HepG2 (cell line): ENCODE measurements at regions of chr19 and their contacts with region 1.

Region 1: DNA sequence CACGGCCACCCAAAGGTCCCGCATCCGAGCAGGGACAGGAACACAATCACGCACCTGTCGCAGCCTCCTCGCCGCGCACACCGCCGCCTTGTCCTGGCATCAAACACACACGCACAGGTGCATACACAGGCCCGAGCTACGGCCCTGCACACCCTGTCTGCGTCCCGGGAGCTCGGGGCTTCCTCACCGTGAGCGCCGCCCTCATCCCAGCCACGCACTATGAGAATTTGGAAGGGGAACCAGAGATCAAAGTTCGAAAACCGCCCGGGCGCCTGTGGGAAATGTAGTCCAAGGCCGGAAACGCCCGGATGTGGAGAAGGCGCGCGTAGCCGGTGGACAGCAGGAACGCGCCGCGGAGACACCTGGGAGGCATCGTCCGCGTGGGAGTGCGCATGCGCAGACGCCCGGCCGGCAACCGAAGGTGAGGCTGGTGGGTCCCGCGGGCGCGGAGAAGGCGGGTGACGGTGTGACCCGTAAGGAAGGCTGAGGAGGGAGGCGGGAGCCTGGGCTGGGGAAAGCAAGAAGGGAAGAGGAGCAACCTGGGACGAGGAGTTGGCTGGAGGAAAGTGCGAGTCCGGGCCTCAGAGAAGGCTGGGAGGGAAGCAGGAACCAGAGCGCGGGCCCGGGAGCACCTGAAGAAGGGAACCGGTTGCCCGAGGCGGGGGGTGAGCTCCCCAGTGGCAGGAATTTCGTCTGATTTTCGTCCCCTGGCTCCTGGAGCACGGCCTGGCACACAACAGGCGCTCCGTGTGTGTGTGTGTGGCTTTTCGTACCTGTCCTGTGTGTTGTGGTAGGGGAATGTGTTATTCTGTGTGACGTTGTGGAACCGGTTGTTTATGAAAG is at the start of gene ZNF567:
- DNase-seq: peak; percentile 95
- ATAC-seq: peak; percentile 96
- H3K4me3 ChIP-seq: peak within 1 kb of the TSS; percentile 70 to 88 (median 86)
- H3K27ac ChIP-seq: peak within 1 kb of the TSS; percentile 62
- H3K4me1 ChIP-seq: peaks cover 16% of the 10 kb centered on the region
- H3K27me3 ChIP-seq: peaks cover 0 to 3% of the 10 kb centered on the region in 2 experiments; a peak in 2 of 5 replicates
- CTCF ChIP-seq: 0 out of 2 replicates have a peak, but pooled peaks have one; percentile 3
- EP300 ChIP-seq: peak; percentile 41 to 42; a peak in 1 of 4 replicates
- POLR2A ChIP-seq: peak; percentile 75 to 84
- RAD21 ChIP-seq: no peak
- total RNA-seq, gene ZNF567: 6.8 and 9.3 TPM in 2 replicates

Region 2: DNA sequence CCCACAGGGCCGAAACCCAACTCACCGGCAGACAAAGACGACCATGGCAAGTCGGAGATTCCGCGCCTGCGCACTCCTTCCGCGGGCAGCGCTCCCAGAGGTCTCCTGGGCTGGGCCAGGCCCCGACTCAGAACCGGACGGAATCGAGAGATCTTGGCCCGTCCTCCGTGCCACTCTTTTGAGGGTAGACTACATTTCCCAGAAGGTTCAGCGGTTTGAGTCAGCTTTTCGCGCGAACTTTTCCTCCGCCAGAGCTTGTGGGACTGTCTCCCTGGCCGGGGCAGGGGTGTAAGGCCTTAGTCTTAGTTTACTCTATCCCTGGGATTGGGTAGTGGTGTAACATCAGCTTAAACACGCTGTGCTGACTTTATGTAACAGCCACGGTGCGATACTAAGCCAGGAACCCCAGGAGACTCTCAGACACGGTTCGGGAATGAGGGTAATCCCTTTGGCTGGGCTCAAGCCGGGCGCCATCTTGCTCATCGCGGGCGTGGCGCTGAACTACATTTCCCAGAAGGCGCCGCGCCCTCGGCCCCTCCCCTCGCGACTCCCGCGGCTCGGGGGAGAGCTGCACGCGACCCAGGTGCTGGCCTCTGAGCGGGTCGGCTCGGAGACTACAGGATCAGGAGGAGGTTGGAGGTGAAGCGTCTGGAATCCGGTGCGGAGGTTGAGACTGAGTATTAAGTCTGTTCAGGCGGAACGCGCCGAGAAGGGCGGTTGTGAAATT is 159.1 kb before region 1 on chr19 and contains the start of gene ZNF260:
- CTCF ChIA-PET with region 1: no interaction called
- POLR2A ChIA-PET with region 1: interaction called, 12 read pairs
- in situ Hi-C with region 1: no loop called
- intact Hi-C with region 1: no loop called
- DNase-seq: peak; percentile 95
- ATAC-seq: peak; percentile 96
- H3K4me3 ChIP-seq: peak within 1 kb of the TSS; percentile 73 to 93 (median 85)
- H3K27ac ChIP-seq: peak within 1 kb of the TSS; percentile 86
- H3K4me1 ChIP-seq: peaks cover 18% of the 10 kb centered on the region
- H3K27me3 ChIP-seq: no peaks in the 10 kb centered on the region; a peak in 1 of 5 replicates
- CTCF ChIP-seq: 0 out of 2 replicates have a peak, but pooled peaks have one; percentile 3
- EP300 ChIP-seq: no peak
- POLR2A ChIP-seq: peak; percentile 77 to 90
- RAD21 ChIP-seq: peak; percentile 25; the same call in 1 of the 2 replicates
- total RNA-seq, gene ZNF260: 10.5 and 19.9 TPM in 2 replicates

Region 3: DNA sequence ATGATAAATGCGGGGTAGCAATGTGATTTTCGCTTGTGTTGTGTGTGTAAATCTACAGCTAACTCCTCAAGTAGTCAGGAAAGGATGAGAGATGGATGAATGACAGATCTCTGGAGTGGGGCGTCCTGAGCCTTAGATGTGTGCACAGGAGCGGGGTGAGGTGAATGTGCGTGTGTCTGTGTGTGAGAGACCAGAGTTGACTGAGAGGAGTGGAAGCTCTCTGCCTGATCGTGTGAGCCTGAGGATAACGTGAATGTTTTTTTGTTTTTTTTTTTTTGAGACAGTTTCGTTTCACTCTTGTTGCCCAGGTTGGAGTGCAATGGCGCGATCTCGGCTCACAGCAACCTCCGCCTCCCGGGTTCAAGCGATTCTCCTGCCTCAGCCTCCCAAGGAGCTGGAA is 21.6 kb before region 1 on chr19:
- CTCF ChIA-PET with region 1: no interaction called
- POLR2A ChIA-PET with region 1: interaction called, 18 read pairs
- in situ Hi-C with region 1: no loop called
- intact Hi-C with region 1: loop called (anchors 2 kb)
- DNase-seq: no peak
- ATAC-seq: no peak
- H3K4me3 ChIP-seq: peak overlapping the region; percentile 91 to 96 (median 93)
- H3K27ac ChIP-seq: no peak overlapping the region
- H3K4me1 ChIP-seq: peaks cover 8% of the 10 kb centered on the region
- H3K27me3 ChIP-seq: no peaks in the 10 kb centered on the region; a peak in 2 of 5 replicates
- CTCF ChIP-seq: no peak
- EP300 ChIP-seq: no peak
- POLR2A ChIP-seq: no peak
- RAD21 ChIP-seq: no peak

Region 4: GRCh38 chr19:36745870-36746269 is 58.4 kb after region 1 on chr19:
- CTCF ChIA-PET with region 1: no interaction called
- POLR2A ChIA-PET with region 1: no interaction called
- in situ Hi-C with region 1: no loop called
- intact Hi-C with region 1: no loop called
- DNase-seq: no peak
- ATAC-seq: no peak
- H3K4me3 ChIP-seq: no peak overlapping the region
- H3K27ac ChIP-seq: no peak overlapping the region
- H3K4me1 ChIP-seq: no peaks in the 10 kb centered on the region
- H3K27me3 ChIP-seq: no peaks in the 10 kb centered on the region
- CTCF ChIP-seq: no peak
- EP300 ChIP-seq: no peak
- POLR2A ChIP-seq: no peak
- RAD21 ChIP-seq: no peak

Region 5: DNA sequence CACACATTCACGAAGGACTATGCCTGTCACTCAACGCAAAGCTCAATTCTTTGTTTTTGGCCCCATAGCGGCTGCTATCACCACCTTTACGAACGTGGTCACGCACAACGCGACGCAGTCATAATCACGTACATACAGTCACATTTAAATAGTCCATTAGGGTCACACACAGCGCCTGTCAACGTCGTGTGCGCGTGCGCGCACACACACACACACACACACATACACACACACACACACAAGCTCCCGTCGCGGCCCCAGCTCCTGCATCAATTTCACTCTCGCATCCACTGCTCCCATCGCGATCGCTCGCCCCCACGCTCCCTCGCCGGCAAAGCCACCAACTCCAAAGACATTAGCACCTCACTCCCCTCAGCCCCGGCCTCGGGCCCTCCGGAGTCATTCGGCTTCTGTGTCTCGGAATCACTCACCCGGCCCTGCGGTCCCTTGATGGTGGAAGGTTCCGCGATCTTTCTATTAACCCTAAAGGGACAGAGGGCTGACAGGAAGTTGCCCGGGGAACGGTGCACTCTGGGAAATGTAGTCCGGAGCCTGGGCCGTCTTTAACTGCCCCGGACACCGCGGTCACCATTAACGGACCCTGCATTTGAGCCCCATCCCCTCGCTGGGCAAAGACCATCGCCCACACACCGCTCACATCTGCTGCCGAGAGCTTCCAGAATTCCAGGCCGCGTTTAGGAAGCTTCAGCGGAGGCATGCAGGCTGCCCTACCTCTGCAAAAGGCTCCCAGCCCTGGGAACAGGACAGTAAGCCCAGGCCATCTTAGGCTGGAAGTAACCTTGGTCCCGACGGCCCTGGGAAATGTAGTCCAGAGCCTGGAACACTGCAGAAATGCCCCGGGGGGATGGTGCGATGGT is 150.7 kb after region 1 on chr19 and contains the start of gene ZNF790:
- CTCF ChIA-PET with region 1: no interaction called
- POLR2A ChIA-PET with region 1: no interaction called
- in situ Hi-C with region 1: no loop called
- intact Hi-C with region 1: loop called (anchors 5 kb)
- DNase-seq: peak; percentile 89
- ATAC-seq: peak; percentile 96
- H3K4me3 ChIP-seq: peak within 1 kb of the TSS; percentile 77 to 85 (median 84)
- H3K27ac ChIP-seq: peak within 1 kb of the TSS; percentile 86
- H3K4me1 ChIP-seq: peaks cover 19% of the 10 kb centered on the region
- H3K27me3 ChIP-seq: no peaks in the 10 kb centered on the region; a peak in 1 of 5 replicates
- CTCF ChIP-seq: no peak
- EP300 ChIP-seq: 0 out of 4 replicates have a peak, but pooled peaks of 1 of the 2 experiments have one; percentile 16
- POLR2A ChIP-seq: peak; percentile 61 to 78; a peak in 3 of 4 replicates
- RAD21 ChIP-seq: 0 out of 2 replicates have a peak, but pooled peaks have one; percentile 23
- total RNA-seq, gene ZNF790: 5.3 and 8.5 TPM in 2 replicates